Ascending aorta (tissue), 2 donors: ENCODE measurements at regions of chr2 and their contacts with region 1.

Region 1: DNA sequence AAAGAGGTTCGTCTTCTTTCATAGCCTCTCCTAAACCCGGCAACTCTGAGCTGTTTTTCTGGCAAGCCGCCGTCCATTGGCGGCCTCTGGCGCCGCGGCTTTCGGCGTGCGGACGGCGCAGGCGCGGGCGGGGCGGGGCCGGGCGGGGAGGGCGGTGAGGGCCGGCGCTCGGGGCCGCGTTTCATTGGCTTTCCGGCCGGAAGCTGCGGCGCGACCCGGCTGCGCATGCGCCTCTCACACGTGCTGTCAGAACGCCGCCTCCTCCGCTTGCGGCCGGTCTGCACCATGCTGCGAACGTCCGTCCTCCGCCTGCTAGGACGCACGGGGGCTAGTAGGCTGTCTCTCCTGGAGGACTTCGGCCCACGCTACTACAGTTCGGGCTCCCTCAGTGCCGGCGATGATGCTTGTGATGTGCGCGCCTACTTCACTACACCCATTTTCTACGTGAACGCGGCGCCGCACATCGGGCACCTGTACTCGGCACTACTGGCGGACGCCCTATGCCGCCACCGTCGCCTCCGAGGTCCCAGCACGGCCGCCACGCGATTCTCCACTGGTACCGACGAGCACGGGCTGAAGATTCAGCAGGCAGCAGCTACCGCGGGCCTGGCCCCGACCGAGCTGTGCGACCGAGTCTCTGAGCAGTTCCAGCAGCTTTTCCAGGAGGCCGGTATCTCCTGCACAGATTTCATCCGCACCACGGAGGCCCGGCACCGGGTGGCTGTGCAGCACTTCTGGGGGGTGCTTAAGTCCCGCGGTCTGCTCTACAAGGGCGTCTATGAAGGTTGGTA is at the start of gene MARS2:
- DNase-seq: peak; percentile 62 to 95
- H3K4me3 ChIP-seq: peak within 1 kb of the TSS; percentile 73 to 84
- H3K27ac ChIP-seq: peak within 1 kb of the TSS; percentile 67 to 81
- H3K4me1 ChIP-seq: peaks cover 10 to 21% of the 10 kb centered on the region in 2 donors
- H3K27me3 ChIP-seq: no peaks in the 10 kb centered on the region
- CTCF ChIP-seq: no peak
- total RNA-seq, gene MARS2: 6.5 TPM

Region 2: DNA sequence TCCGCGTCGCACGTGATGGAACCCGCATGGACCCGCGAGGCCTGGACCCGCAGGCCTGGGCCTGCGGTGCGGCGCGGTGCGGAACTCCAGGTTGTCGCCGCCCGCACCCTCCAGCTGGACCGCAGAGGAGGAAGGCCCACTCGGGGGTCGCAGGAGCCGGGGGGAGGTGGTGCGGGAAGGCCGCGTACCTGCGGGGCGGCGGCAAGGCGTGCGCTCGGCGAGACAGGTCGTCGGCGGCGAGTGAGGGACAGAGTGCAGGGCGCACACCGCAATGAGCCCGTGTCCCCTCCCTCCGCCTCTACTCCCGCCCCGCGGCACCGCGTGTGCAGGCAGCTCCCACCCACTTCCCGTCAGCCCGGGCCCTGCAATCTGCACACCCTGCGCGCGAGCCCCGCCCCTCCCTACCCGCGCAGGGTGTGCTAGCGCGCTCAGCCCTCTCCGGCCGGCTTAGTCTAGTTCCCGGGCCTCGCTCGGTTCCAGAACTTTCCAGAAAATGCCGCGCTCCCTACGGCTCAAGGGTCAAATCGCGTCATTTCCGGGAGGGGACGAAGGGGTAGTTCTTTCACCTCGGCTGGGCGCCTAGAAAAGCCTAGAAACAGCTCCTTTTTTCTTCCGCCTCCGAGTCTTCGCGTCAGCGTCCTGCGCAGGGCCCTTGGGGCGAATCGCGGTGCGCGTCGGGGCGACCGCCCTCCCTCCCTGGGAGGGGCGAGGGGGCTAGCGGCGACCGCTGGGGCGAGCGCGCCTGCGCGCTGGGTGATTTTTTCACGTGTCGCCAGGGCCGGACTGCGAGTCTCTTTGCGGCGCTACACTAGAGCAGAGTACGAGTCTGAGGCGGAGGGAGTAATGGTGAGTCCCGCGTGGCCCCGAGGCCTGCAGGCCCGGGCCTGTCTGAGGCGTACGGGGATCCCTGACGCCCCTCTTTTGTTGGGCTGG is 205.5 kb before region 1 on chr2 and contains the starts of genes HSPD1 and HSPE1:
- intact Hi-C with region 1: loop called (anchors 1 kb)
- DNase-seq: peak; percentile 93 to 99
- H3K4me3 ChIP-seq: peak within 1 kb of the TSS; percentile 94 to 98
- H3K27ac ChIP-seq: peak within 1 kb of the TSS; percentile 97 to 98
- H3K4me1 ChIP-seq: peaks cover 11 to 42% of the 10 kb centered on the region in 2 donors
- H3K27me3 ChIP-seq: no peaks in the 10 kb centered on the region
- CTCF ChIP-seq: peak in 1 of 3 experiments; percentile 29
- total RNA-seq, gene HSPD1: 110 TPM
- total RNA-seq, gene HSPE1: 72.7 TPM

Region 3: GRCh38 chr2:197675711-197676188 is 29.6 kb before region 1 on chr2:
- intact Hi-C with region 1: loop called (anchors 2 kb)
- DNase-seq: no peak
- H3K4me3 ChIP-seq: peak overlapping the region; percentile 48 to 65
- H3K27ac ChIP-seq: peak overlapping the region; percentile 68 to 85
- H3K4me1 ChIP-seq: peaks cover 0 to 10% of the 10 kb centered on the region in 2 donors
- H3K27me3 ChIP-seq: no peaks in the 10 kb centered on the region
- CTCF ChIP-seq: no peak

Region 4: DNA sequence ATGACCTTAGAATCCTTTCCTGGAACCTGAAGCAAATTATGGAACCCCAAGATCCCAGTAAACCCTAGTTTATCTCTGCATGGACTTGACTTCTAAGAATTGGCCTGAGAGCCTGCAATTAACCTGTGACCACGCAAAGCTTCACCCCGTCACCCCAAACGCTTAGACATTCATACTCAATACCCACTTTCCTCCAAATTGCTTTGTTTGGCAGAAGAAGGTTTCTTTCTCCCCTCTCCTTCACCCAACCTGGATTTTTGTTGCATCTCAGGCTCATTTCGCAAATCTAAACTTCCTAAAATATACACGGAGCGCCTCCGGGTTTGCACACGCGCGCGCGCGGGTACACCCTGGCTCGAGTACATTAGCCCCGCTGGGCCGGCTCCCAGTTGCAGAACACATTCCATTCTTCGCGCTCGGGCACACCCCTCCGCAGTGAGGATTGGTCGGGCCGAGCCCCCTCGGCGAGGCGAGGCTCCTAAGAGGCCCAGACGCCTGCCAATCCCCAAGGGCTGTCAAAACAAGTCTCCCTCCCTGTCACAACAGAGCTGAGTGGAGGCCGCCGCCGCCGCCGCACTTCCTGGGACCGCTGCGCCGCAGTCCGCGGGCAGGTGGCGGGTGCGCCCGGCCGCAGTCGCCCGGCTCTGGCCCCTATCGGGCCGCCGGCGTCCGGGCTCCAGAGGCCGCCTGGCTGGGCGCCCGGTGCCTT is 98.9 kb after region 1 on chr2 and contains the start of gene PLCL1:
- intact Hi-C with region 1: loop called (anchors 1 kb)
- DNase-seq: peak; percentile 89 to 97
- H3K4me3 ChIP-seq: peak within 1 kb of the TSS; percentile 70 to 99
- H3K27ac ChIP-seq: peak within 1 kb of the TSS; percentile 87 to 96
- H3K4me1 ChIP-seq: peaks cover under 1 to 9% of the 10 kb centered on the region in 2 donors
- H3K27me3 ChIP-seq: no peaks in the 10 kb centered on the region
- CTCF ChIP-seq: no peak
- total RNA-seq, gene PLCL1: 14.3 TPM

Region 5: DNA sequence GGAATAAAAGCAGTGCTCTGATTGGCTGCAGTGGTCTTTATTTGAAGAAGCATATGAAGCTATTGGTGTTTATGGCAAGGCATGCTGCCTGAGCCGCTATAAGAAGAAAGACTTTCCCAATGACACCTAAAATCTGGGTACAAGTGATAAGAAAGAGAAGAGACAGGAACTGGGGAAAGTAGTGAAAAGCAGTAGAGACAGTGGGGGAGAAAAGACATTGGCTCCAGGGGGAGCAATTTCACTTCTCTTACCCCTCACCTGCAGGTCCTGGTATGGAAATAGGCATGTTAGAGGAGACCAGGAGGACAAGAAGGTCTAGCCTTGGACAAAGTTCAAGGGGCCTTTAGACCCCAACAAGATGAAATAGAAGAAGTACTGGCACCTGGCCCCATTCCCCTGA is 146.1 kb after region 1 on chr2:
- intact Hi-C with region 1: no loop called
- DNase-seq: no peak
- H3K4me3 ChIP-seq: no peak overlapping the region
- H3K27ac ChIP-seq: no peak overlapping the region
- H3K4me1 ChIP-seq: peaks cover 4 to 20% of the 10 kb centered on the region in 2 donors
- H3K27me3 ChIP-seq: no peaks in the 10 kb centered on the region
- CTCF ChIP-seq: no peak

Region 6: DNA sequence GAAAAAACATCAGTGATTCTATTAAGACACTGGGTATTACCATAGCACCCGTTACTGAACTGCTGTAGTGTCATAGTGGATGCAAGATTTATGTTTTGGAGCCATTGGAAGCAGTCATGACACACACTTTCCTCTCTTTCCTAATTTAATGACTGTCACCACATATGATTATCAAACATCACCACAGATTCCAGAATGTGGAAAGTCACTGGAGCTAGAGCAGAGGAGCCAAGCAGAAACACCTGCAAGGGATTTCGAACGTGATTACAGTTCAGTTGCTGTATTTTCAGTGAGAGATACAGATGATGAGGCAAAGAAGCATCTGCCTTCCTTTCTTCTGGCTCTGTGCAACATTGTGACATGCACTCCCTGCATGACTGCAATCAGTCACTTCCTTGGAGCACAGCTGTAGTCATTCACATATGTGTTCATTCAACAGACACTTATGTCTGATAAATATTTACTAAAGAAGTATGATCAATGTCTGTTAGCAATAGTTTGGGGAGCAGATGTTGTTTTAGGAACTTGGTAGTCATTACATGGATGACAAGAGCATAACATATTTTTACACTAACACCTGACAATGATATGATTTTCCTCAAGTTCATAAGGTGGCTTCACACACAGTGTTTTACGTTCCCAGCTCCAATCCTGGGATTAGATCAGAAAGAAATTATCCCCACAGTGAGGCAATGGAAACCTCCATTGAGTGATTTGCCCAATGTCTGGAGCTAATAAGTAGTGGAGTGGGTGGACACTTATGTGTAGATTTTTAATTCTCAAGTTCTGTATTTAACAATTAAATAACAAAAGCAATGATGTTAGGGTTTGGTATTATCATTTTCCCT is 515.7 kb after region 1 on chr2:
- intact Hi-C with region 1: no loop called
- DNase-seq: no peak
- H3K4me3 ChIP-seq: no peak overlapping the region
- H3K27ac ChIP-seq: no peak overlapping the region
- H3K4me1 ChIP-seq: no peaks in the 10 kb centered on the region
- H3K27me3 ChIP-seq: no peaks in the 10 kb centered on the region
- CTCF ChIP-seq: no peak

Region 7: GRCh38 chr2:199303728-199304177 is 1598.4 kb after region 1 on chr2:
- intact Hi-C with region 1: loop called (anchors 10 kb)
- DNase-seq: peak; percentile 25 to 86
- H3K4me3 ChIP-seq: peak overlapping the region in 1 of 2 donors; percentile 20
- H3K27ac ChIP-seq: peak overlapping the region; percentile 81 to 83
- H3K4me1 ChIP-seq: peaks cover 0 to 20% of the 10 kb centered on the region in 2 donors
- H3K27me3 ChIP-seq: no peaks in the 10 kb centered on the region
- CTCF ChIP-seq: no peak